Activated T-helper 2 cell treated with anti-CD3 and anti-CD28 coated beads, Interferon-gamma antibody, Interleukin-2, Interleukin-4, amounts not matched to agents 10 μg/mL and 5 μg/mL and 100 μg/mL, durations not matched to agents 14 hours and 24 hours and 36 hours (primary cell): ENCODE measurements at regions of chr7 and their contacts with region 1.

Region 1: DNA sequence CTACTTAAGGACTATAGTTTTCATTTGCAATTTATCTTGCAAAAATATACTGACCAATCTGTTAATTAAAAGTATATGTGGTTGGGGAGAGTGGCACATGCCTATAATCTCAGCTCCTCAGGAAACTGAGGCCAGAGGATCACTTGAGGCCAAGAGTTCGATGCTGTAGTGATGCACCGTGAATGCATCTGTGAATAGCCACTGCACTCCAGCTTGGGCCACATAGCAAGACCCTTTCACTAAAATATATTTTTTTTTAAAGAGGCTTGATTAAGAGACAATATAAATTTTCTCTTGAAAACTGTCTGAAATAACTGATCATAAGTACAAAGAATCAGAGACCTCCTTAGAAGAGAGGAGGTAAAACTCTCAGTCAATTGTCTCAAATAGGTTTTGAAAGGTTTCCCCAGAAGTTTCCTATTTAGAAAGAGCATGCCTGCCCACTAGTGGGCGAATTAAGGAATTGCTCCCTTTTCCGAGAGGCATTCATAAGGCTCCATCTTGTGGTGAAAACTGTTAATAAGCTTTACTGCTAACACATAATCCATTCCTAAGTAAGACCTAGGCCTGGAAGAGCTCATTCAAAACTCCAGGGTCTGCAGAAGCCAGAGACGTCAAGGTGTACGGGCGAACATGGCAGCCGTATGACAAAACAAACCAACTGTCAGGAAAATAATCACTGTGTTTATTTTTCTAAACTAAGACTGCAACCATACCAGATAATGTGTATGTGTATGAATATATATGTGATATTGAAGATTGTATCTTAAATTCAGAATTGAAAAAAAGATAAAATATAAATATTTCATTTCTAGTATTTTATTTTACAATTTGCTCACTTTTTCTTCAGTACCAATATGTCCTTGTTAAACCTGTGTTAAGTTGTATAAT is 6.8 kb upstream of the TAS2R40 start:
- DNase-seq: peak; percentile 48
- H3K4me3 Mint-ChIP-seq: no peak overlapping the region
- H3K27ac Mint-ChIP-seq: no peak overlapping the region
- H3K4me1 Mint-ChIP-seq: no peaks in the 10 kb centered on the region
- H3K27me3 Mint-ChIP-seq: peaks cover 8% of the 10 kb centered on the region

Region 2: GRCh38 chr7:142412551-142413193 is 802.4 kb before region 1 on chr7:
- intact Hi-C with region 1: loop called (anchors 10 kb)
- DNase-seq: no peak
- H3K4me3 Mint-ChIP-seq: no peak overlapping the region
- H3K27ac Mint-ChIP-seq: no peak overlapping the region
- H3K4me1 Mint-ChIP-seq: no peaks in the 10 kb centered on the region
- H3K27me3 Mint-ChIP-seq: peaks cover 4% of the 10 kb centered on the region